CD4-positive, alpha-beta T cell (primary cell): ENCODE measurements at regions of chr2 and their contacts with region 1.

Region 1: DNA sequence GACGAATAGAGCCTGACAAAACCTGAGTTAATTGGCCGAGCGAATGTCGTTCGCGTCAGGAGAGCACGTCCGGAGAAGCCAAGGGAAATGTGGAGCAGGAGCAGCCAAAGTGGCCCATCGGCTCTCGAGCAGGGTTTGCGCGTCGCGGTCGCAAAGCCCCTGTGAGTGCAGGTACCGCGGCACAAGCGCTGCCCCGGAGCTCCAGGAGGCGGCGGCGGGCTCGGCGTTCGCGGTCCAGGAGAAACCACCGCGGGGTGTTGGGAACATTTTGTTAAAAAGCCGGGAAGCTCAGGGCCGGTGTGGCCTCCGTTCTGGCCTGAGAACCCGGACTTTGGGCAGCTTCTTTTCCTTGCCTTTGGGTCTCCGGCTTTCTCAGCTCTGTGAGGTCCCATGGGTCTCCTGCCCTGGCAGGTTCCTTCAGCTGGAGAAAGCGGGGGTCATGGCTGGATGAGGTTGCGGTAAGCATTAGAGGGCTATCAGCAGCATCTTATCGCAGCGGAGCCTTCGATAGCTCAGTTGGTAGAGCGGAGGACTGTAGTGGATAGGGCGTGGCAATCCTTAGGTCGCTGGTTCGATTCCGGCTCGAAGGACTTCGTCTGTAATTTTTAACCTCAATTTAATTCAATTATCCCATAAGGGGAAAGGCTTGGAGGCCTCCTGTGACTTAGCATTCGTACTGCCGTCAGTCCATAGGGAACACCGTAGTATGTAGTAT is 1.0 kb upstream of the AGBL5 start:
- DNase-seq: peak; percentile 86 to 97 (median 92)
- ATAC-seq: peak; percentile 57
- H3K4me3 ChIP-seq: peak overlapping the region; percentile 76
- H3K4me3 Mint-ChIP-seq: peak overlapping the region; percentile 100
- H3K27ac ChIP-seq: peak overlapping the region; percentile 77 to 83
- H3K27ac Mint-ChIP-seq: peak overlapping the region; percentile 100
- H3K4me1 ChIP-seq: peaks cover 20% of the 10 kb centered on the region
- H3K4me1 Mint-ChIP-seq: peaks cover 27% of the 10 kb centered on the region
- H3K27me3 ChIP-seq: no peaks in the 10 kb centered on the region
- H3K27me3 Mint-ChIP-seq: peaks cover 15% of the 10 kb centered on the region
- CTCF ChIP-seq: peak; percentile 42

Region 2: DNA sequence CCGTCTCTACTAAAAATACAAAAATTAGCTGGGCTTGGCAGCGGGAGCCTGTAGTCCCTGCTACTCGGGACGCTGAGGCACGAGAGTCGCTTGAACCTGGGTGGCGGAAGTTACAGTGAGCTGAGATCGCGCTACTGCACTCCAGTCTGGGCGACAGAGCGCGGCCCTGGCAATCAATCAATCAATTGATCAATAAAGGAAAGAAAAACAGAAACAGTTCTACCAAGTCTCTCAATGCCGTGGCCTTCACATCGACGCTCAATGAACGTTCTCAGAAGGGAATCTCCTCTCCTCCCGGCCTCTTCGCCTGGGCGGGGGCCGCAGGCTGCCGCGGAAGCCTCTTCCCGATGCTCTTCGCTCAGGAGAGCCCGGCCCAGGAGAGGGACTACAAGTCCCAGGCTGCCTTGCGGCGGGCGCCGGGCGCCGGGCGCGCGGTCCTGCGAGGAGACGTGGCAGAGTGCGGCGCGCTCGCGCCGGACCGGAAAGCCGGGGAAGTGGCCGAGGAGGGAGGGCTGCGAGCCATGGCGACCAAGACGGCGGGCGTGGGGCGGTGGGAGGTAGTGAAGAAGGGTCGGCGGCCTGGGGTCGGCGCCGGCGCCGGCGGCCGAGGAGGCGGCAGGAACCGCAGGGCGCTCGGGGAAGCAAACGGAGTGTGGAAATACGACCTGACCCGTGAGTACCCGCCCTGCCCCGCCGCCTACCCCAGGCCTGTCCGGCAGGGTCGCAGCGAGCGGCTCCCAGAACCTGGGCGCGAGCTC is 17.8 kb before region 1 on chr2 and contains the start of gene TMEM214:
- CTCF ChIA-PET with region 1: interaction called, 13 read pairs
- POLR2A ChIA-PET with region 1: interaction called, 37 read pairs
- intact Hi-C with region 1: loop called (anchors 1 to 2 kb)
- DNase-seq: peak; percentile 55 to 86 (median 74)
- ATAC-seq: peak; percentile 94
- H3K4me3 ChIP-seq: peak within 1 kb of the TSS; percentile 92
- H3K4me3 Mint-ChIP-seq: peak within 1 kb of the TSS; percentile 96
- H3K27ac ChIP-seq: peak within 1 kb of the TSS; percentile 64 to 73
- H3K27ac Mint-ChIP-seq: peak within 1 kb of the TSS; percentile 83
- H3K4me1 ChIP-seq: peaks cover 36% of the 10 kb centered on the region
- H3K4me1 Mint-ChIP-seq: peaks cover 45% of the 10 kb centered on the region
- H3K27me3 ChIP-seq: no peaks in the 10 kb centered on the region
- H3K27me3 Mint-ChIP-seq: no peaks in the 10 kb centered on the region
- CTCF ChIP-seq: no peak
- total RNA-seq, gene TMEM214: 22.0 to 24.6 TPM

Region 3: DNA sequence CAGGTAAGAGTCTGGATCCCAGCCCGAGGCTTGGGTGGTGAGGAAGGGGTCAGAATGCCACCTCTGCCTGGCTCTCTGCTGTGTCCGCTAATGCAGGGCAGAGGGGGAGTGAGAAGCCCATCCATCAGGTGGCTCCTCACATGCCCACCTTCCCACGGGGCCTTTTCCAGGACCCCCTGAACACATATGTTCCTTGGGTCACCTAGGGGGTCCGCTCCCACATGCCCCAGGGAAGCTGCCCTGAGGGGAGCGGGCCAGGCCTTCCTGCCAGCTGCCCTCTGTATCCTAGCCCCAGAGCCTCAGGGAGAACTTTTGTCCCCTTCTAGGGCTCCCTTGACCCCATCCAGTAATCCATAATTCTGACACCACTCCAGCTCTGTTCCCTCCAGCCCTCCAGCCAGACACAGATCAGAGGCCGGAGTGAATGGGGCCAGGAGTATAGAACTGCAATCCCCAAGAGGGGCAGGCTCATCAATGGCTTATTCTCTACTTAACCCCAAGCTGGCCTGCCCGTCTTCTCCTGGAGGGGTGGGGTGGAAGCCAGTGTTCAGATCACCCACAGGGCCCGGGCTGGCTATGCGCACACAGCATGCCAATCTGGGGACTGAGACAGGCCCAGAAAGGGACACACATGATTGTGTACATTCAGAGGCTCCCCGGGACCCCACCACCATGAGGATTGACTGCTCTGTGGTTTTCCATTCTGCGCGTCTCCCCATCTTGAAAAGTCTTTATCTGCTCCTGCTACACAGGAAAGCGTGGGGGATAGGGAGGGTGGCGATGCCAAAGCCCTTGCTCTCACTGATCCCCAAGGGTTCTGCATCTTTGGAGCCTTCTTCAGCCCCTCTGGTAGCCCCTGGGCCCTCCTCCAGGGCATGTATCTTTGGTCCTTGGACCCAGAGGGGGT is 29.0 kb after region 1 on chr2:
- CTCF ChIA-PET with region 1: interaction called, 10 read pairs
- POLR2A ChIA-PET with region 1: interaction called, 301 read pairs
- intact Hi-C with region 1: loop called in 1 of 2 experiments (anchors 2 kb)
- DNase-seq: no peak
- ATAC-seq: no peak
- H3K4me3 ChIP-seq: no peak overlapping the region
- H3K4me3 Mint-ChIP-seq: no peak overlapping the region
- H3K27ac ChIP-seq: no peak overlapping the region
- H3K27ac Mint-ChIP-seq: no peak overlapping the region
- H3K4me1 ChIP-seq: peaks cover 44% of the 10 kb centered on the region
- H3K4me1 Mint-ChIP-seq: peaks cover 46% of the 10 kb centered on the region
- H3K27me3 ChIP-seq: no peaks in the 10 kb centered on the region
- H3K27me3 Mint-ChIP-seq: no peaks in the 10 kb centered on the region
- CTCF ChIP-seq: no peak

Region 4: DNA sequence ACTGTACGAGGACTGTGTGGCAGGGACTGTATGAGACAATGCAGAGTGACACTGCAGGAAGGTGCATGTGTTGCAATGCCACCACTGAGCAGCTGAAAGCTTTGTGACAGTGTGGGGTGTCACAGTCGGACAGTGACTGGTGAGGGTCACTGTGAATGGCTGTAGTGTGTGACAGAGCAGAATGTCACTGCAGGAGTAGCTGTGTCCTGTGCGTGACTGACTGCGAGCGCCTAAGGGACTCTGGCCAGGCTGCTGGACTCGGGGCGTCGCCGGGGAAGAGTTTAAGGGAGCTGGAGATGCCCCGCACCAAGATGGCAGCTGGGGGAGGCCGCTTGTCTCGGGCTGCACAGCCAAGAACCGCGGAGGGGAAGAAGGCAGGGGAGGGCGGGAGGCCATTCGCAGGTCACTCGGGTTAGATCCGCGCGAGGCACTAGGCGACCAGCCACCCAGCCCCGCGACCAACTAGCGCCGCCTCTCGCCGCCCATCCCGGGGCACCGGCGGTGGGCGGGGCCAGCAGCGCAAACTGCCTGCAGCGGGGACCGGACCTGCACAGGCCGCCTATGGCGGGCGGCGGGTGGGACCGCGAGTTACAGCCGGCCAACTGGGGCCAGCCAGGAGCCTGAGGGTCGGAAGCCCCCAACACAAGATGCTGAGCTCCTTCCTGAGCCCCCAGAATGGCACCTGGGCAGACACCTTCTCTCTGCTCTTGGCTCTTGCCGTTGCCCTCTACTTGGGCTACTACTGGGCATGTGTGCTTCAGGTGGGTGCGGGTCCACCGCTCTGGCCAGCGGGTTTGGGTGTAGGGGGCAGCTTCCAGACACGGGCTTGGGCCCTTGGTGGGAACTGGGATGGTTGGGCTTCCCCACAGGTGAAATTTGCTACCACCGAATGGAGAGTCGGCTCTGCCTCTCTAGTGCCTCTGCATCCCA is 73.1 kb after region 1 on chr2 and contains the start of gene ABHD1:
- CTCF ChIA-PET with region 1: no interaction called
- POLR2A ChIA-PET with region 1: interaction called, 17 read pairs
- intact Hi-C with region 1: no loop called
- DNase-seq: peak; percentile 23 to 86 (median 58)
- ATAC-seq: peak; percentile 79
- H3K4me3 ChIP-seq: peak within 1 kb of the TSS; percentile 78
- H3K4me3 Mint-ChIP-seq: peak within 1 kb of the TSS; percentile 92
- H3K27ac ChIP-seq: peak within 1 kb of the TSS in 1 of 2 donors; percentile 52
- H3K27ac Mint-ChIP-seq: peak within 1 kb of the TSS; percentile 81
- H3K4me1 ChIP-seq: peaks cover 22% of the 10 kb centered on the region
- H3K4me1 Mint-ChIP-seq: peaks cover 18% of the 10 kb centered on the region
- H3K27me3 ChIP-seq: peaks cover under 1 to 6% of the 10 kb centered on the region in 2 experiments
- H3K27me3 Mint-ChIP-seq: peaks cover 19% of the 10 kb centered on the region
- CTCF ChIP-seq: no peak
- total RNA-seq, gene ABHD1: 1.0 to 1.3 TPM

Region 5: GRCh38 chr2:27211829-27212627 is 161.6 kb after region 1 on chr2 and contains the starts of genes ATRAID and SLC5A6:
- CTCF ChIA-PET with region 1: no interaction called
- POLR2A ChIA-PET with region 1: interaction called, 19 read pairs
- intact Hi-C with region 1: loop called in 1 of 2 experiments (anchors 5 kb)
- DNase-seq: peak; percentile 76 to 95 (median 86)
- ATAC-seq: peak; percentile 83
- H3K4me3 ChIP-seq: peak within 1 kb of the TSS; percentile 78
- H3K4me3 Mint-ChIP-seq: peak within 1 kb of the TSS; percentile 98
- H3K27ac ChIP-seq: peak within 1 kb of the TSS; percentile 96 to 97
- H3K27ac Mint-ChIP-seq: peak within 1 kb of the TSS; percentile 98
- H3K4me1 ChIP-seq: peaks cover 26% of the 10 kb centered on the region
- H3K4me1 Mint-ChIP-seq: peaks cover 40% of the 10 kb centered on the region
- H3K27me3 ChIP-seq: no peaks in the 10 kb centered on the region
- H3K27me3 Mint-ChIP-seq: no peaks in the 10 kb centered on the region
- CTCF ChIP-seq: no peak
- total RNA-seq, gene ATRAID: 79.1 to 82.5 TPM
- total RNA-seq, gene SLC5A6: 196 to 207 TPM

Region 6: DNA sequence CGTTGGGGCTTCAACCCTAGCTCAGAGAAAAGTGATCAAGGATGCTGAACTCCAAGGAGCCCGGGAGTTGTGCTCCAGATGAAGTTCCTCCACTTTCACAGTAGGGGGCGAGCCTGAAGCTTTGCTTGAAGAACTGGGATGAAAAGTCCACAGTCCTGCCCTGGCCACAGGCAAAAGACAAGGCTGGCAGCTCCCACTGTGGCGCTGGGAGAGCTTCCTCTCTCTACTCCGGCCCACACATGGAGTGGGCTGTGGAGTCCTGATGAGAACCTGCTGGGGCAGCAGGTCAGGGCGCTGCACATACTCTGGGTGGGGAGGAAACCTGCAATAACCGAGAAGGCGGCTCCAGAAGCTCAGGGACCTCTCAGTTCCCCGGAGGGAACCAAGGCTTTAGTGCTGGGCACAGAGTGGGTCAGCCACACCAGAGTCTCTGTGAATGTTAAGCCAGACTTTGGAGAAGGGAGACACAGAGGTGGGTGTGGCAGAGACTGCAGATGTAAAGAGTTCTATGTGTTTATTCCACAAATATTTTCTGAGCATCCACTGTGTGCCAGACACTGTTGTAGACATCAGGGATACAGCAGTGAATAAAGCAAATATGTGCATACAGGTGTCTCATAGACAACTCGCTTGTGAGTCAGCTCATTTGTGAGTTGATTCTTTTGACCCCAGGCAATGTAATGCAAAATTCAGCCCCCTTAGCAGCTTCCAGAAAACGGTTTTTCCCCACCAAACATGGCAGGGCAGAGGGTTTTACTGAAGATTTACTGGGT is 673.1 kb after region 1 on chr2:
- CTCF ChIA-PET with region 1: no interaction called
- POLR2A ChIA-PET with region 1: no interaction called
- intact Hi-C with region 1: no loop called
- DNase-seq: peak in 6 of 14 experiments; percentile 6 to 53 (median 30)
- ATAC-seq: peak; percentile 49
- H3K4me3 ChIP-seq: no peak overlapping the region
- H3K4me3 Mint-ChIP-seq: no peak overlapping the region
- H3K27ac ChIP-seq: no peak overlapping the region
- H3K27ac Mint-ChIP-seq: no peak overlapping the region
- H3K4me1 ChIP-seq: no peaks in the 10 kb centered on the region
- H3K4me1 Mint-ChIP-seq: peaks cover under 1% of the 10 kb centered on the region
- H3K27me3 ChIP-seq: peaks cover 3 to 5% of the 10 kb centered on the region in 2 experiments
- H3K27me3 Mint-ChIP-seq: peaks cover 12% of the 10 kb centered on the region
- CTCF ChIP-seq: peak; percentile 64